Caco-2 (cell line): ENCODE measurements at regions of chr1 and their contacts with region 1.

Region 1: GRCh38 chr1:59296358-59297256 is at the start of gene FGGY:
- DNase-seq: peak; percentile 89 to 94
- H3K4me3 ChIP-seq: peak within 1 kb of the TSS; percentile 39
- H3K4me3 Mint-ChIP-seq: peak within 1 kb of the TSS; percentile 83
- H3K27ac Mint-ChIP-seq: peak within 1 kb of the TSS; percentile 79
- H3K4me1 ChIP-seq: no peaks in the 10 kb centered on the region
- H3K4me1 Mint-ChIP-seq: peaks cover 15% of the 10 kb centered on the region
- H3K27me3 ChIP-seq: no peaks in the 10 kb centered on the region
- H3K27me3 Mint-ChIP-seq: no peaks in the 10 kb centered on the region
- CTCF ChIP-seq: no peak
- total RNA-seq, gene FGGY: 3.4 and 6.4 TPM in 2 replicates

Region 2: DNA sequence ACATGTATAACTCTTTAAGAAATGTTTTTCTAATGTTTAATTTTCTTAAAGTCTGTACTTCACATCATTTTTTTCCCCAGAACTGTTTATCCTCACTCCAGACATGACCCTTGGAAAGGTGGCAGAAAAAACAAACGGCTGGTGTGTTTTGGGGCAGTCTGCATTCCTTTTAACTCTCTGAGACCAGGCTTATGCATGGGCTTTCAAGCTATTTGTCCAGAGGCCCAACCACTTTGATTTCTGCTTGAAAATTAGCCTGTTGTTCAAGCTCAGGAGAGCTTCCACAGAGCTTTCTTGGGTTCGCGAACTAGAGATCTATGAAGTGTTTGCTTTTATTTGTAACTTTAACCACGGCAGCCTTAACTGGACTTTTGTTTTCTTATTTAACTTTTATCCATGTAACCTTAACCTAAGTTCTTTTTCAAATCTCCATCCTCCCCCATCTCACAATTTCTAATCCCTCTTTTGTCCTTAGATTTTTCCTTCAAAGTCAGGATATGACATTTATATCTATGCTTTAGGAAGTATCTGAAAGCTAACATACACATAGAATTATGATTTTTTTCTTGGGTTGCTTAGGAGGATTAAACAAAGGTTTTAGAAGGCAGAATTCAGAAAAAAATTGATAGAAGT is 112.1 kb after region 1 on chr1:
- CTCF ChIA-PET with region 1: no interaction called
- POLR2A ChIA-PET with region 1: no interaction called
- intact Hi-C with region 1: loop called (anchors 10 kb)
- DNase-seq: no peak
- H3K4me3 ChIP-seq: no peak overlapping the region
- H3K4me3 Mint-ChIP-seq: no peak overlapping the region
- H3K27ac Mint-ChIP-seq: no peak overlapping the region
- H3K4me1 ChIP-seq: no peaks in the 10 kb centered on the region
- H3K4me1 Mint-ChIP-seq: no peaks in the 10 kb centered on the region
- H3K27me3 ChIP-seq: no peaks in the 10 kb centered on the region
- H3K27me3 Mint-ChIP-seq: no peaks in the 10 kb centered on the region
- CTCF ChIP-seq: no peak